Posterior vena cava (tissue), 2 donors: ENCODE measurements at regions of chrX and their contacts with region 1.

Region 1: DNA sequence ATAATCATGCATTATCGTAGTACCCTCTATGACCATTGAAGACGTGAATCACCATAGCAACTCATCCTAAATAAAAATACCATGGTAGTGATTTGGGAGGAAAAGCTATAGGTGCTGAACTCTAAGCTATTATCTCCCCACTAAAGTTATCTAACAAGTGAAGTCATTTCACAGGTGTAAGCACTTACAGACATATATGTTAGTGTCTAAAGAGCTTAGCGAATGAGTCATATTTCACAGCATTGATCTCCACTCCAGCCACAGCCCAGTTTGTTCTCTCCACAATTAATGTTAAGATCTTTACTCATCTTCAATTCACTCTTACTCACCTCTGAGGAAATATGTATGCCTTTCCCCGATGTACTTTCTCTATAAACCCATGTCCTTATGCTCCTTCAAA is 57.0 kb downstream of the DCAF8L1 start:
- DNase-seq: no peak

Region 2: GRCh38 chrX:28979877-28980276 is 1055.6 kb after region 1 on chrX:
- intact Hi-C with region 1: loop called in 1 of 2 experiments (anchors 5 kb)
- DNase-seq: no peak